IMR-90 (cell line): ENCODE measurements at regions of chrX and their contacts with region 1.

Region 1: GRCh38 chrX:47059142-47059874 is 18.9 kb upstream of the RGN start:
- DNase-seq: no peak
- ATAC-seq: no peak
- H3K4me3 ChIP-seq: no peak overlapping the region
- H3K27ac ChIP-seq: no peak overlapping the region
- H3K4me1 ChIP-seq: no peaks in the 10 kb centered on the region
- H3K27me3 ChIP-seq: peaks cover 21% of the 10 kb centered on the region
- CTCF ChIP-seq: no peak
- POLR2A ChIP-seq: no peak
- RAD21 ChIP-seq: no peak

Region 2: DNA sequence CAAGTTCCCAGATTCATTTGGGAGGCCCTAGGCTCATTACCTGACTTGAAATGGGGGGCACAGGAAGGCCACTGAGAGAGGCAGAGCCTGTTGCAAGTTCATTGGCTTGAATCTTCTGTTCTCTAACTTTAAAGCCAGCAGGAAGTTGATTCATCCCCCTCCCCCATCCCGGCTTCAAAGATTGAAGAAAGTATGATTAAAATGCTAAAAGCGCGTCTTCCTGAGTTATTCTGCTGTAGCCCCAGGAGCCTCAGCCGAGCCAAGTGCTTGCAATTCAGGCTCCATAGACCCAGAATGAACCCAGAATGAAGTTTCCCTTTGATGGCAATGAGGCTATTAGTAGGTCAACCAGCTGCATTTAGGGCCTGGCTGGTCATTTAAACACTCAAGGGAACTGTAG is 471.0 kb before region 1 on chrX:
- CTCF ChIA-PET with region 1: no interaction called
- POLR2A ChIA-PET with region 1: no interaction called
- dilution Hi-C with region 1: no loop called
- in situ Hi-C with region 1: no loop called
- intact Hi-C with region 1: no loop called
- DNase-seq: peak; percentile 68
- ATAC-seq: peak; percentile 70
- H3K4me3 ChIP-seq: no peak overlapping the region
- H3K27ac ChIP-seq: peak overlapping the region; percentile 88
- H3K4me1 ChIP-seq: peaks cover 12% of the 10 kb centered on the region
- H3K27me3 ChIP-seq: no peaks in the 10 kb centered on the region
- CTCF ChIP-seq: no peak
- POLR2A ChIP-seq: no peak
- RAD21 ChIP-seq: no peak

Region 3: DNA sequence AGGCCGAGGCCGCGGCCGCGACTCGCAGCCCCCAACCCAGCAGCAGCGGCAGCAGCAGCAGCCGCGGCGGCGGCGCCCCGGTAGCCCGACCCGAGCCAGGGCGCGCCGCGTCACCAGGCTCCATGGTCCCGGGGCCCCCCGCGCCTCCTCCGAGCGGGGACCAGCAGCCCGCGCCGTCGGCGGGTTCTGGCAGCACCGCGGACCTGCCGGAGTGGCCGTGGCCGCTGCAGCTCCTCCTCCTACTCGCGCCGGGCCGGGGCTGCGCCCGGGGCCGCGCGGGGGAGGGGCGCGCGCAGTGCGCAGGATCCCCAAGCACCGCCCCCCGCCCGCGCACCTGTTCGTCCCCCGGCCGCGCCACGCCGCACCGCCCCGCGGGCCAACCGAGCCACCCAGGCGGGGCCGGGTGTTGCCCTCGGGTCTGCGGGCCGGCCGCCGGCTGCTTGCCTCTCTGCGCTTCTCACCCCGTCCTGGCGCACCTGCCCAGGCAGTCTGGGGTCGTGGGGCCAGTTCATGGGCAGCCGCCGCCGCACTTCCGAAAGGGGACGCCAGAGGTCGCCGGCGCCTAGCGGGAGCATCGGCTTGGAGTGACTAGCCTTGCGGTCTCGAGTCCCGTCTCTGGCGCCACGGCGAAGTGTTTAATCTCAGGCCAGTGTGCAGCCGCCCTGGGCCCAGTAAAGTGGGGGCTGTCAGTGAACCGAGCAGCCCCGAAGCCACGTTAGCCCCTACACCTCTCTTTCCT is 300.2 kb before region 1 on chrX and contains the start of gene SLC9A7:
- CTCF ChIA-PET with region 1: no interaction called
- POLR2A ChIA-PET with region 1: no interaction called
- dilution Hi-C with region 1: no loop called
- in situ Hi-C with region 1: no loop called
- intact Hi-C with region 1: no loop called
- DNase-seq: peak; percentile 61
- ATAC-seq: peak; percentile 86
- H3K4me3 ChIP-seq: peak within 1 kb of the TSS; percentile 83
- H3K27ac ChIP-seq: peak within 1 kb of the TSS; percentile 33; the same call in 1 of the 2 replicates
- H3K4me1 ChIP-seq: peaks cover 5% of the 10 kb centered on the region
- H3K27me3 ChIP-seq: no peaks in the 10 kb centered on the region
- CTCF ChIP-seq: peak; percentile 77
- POLR2A ChIP-seq: no peak
- RAD21 ChIP-seq: peak; percentile 92
- total RNA-seq, gene SLC9A7: 67.5 and 76.4 TPM in 2 replicates

Region 4: DNA sequence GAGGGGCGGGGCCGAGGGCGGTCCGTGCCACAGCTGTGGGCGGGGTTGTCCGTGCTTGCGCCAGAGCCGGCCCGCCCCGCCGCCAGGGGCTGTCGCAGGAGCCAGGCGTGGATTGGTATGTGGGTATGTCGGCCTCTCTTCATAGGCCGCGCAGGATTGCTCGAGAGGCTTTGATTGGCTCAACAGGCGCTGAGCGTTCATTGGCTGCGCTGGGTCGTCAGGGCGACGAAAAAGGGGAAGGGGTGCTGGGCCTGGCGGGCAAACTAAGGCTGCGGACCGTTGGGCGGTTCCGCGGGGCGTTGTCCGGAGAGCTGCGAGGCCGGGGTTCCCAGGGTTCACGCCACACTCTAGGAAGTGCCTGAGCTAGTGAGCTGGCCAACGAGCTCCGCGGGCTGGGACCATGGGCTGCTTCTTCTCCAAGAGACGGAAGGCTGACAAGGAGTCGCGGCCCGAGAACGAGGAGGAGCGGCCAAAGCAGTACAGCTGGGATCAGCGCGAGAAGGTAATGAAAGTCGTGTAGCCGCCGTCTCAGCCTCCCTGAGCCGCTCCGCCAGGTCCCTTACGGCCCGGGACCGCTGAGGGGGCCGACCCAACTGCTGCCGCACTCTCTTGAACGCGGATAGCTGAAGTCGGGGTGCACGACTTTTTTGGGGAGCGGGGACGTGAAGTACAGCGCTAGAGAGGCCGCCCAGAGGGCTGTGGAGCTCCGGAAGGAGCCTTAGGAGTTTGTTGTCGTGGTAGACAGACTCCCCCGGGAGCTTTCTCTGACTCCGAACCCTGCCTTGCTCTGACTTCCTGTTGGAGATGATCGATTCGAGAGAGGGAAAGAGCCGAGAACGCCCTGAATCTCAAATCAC is 222.4 kb before region 1 on chrX and contains the start of gene RP2:
- CTCF ChIA-PET with region 1: no interaction called
- POLR2A ChIA-PET with region 1: no interaction called
- dilution Hi-C with region 1: no loop called
- in situ Hi-C with region 1: no loop called
- intact Hi-C with region 1: no loop called
- DNase-seq: peak; percentile 92
- ATAC-seq: peak; percentile 95
- H3K4me3 ChIP-seq: peak within 1 kb of the TSS; percentile 86
- H3K27ac ChIP-seq: peak within 1 kb of the TSS; percentile 80
- H3K4me1 ChIP-seq: 0 out of 2 replicates have a peak, but pooled peaks cover 2% of the 10 kb centered on the region
- H3K27me3 ChIP-seq: no peaks in the 10 kb centered on the region
- CTCF ChIP-seq: no peak
- POLR2A ChIP-seq: peak; percentile 72
- RAD21 ChIP-seq: no peak
- total RNA-seq, gene RP2: 17.0 and 23.9 TPM in 2 replicates

Region 5: GRCh38 chrX:46978341-46979291 is 80.7 kb before region 1 on chrX:
- CTCF ChIA-PET with region 1: no interaction called
- POLR2A ChIA-PET with region 1: no interaction called
- dilution Hi-C with region 1: no loop called
- in situ Hi-C with region 1: no loop called
- intact Hi-C with region 1: no loop called
- DNase-seq: peak; percentile 81
- ATAC-seq: peak; percentile 76
- H3K4me3 ChIP-seq: no peak overlapping the region
- H3K27ac ChIP-seq: peak overlapping the region; percentile 74; the same call in 1 of the 2 replicates
- H3K4me1 ChIP-seq: peaks cover 5% of the 10 kb centered on the region; the same call in 1 of the 2 replicates
- H3K27me3 ChIP-seq: 0 out of 2 replicates have a peak, but pooled peaks cover 2% of the 10 kb centered on the region
- CTCF ChIP-seq: peak; percentile 58
- POLR2A ChIP-seq: no peak
- RAD21 ChIP-seq: peak; percentile 50

Region 6: DNA sequence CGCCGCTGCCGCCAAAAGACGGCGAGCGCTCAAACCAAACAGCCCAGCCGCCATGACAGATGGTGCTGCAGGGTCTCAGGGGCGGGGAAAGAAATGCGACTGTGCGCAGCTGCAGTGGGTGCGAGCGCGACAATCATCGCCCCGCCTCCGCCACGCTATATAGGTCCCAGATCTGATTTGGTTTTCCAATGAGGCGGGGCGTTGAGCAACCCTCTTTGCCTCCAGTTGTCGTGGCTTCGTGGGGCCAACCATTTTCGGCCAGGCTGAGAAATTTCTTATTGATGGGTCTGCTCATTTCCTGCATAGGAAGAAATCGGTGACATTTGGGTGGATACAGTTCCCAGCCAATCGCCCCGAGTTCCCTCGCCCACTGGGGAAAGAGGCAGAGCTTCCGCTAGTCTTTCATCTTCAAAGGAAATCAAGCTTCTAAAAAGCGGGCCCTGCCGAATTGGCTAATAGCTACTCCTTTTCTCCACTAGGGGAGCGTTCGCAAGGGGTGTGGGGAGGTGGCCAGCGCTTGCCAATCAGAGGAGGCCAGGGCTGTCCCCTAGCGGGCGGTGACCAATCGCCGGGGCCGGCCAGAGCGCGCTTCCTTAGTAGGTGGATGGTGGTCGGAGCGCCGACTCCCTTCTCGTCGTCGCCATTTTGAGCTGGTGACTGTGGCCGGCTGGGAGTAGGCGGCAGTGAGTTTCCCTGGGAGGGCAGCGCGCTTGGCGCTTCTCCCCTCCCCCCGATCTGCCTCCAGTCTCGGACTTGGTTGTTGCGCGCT is 85.5 kb after region 1 on chrX and contains the starts of genes NDUFB11 and RBM10:
- CTCF ChIA-PET with region 1: no interaction called
- POLR2A ChIA-PET with region 1: interaction called, 11 read pairs
- dilution Hi-C with region 1: no loop called
- in situ Hi-C with region 1: no loop called
- intact Hi-C with region 1: no loop called
- DNase-seq: peak; percentile 93
- ATAC-seq: peak; percentile 95
- H3K4me3 ChIP-seq: peak within 1 kb of the TSS; percentile 99
- H3K27ac ChIP-seq: peak within 1 kb of the TSS; percentile 100
- H3K4me1 ChIP-seq: peaks cover 2% of the 10 kb centered on the region; the same call in 1 of the 2 replicates
- H3K27me3 ChIP-seq: peaks cover 7% of the 10 kb centered on the region; the same call in 1 of the 2 replicates
- CTCF ChIP-seq: peak; percentile 66
- POLR2A ChIP-seq: peak; percentile 82
- RAD21 ChIP-seq: no peak
- total RNA-seq, gene NDUFB11: 17.0 and 24.4 TPM in 2 replicates
- total RNA-seq, gene RBM10: 36.0 and 37.8 TPM in 2 replicates